Left colon (tissue), 2 donors: ENCODE measurements at regions of chr1 and their contacts with region 1.

Region 1: DNA sequence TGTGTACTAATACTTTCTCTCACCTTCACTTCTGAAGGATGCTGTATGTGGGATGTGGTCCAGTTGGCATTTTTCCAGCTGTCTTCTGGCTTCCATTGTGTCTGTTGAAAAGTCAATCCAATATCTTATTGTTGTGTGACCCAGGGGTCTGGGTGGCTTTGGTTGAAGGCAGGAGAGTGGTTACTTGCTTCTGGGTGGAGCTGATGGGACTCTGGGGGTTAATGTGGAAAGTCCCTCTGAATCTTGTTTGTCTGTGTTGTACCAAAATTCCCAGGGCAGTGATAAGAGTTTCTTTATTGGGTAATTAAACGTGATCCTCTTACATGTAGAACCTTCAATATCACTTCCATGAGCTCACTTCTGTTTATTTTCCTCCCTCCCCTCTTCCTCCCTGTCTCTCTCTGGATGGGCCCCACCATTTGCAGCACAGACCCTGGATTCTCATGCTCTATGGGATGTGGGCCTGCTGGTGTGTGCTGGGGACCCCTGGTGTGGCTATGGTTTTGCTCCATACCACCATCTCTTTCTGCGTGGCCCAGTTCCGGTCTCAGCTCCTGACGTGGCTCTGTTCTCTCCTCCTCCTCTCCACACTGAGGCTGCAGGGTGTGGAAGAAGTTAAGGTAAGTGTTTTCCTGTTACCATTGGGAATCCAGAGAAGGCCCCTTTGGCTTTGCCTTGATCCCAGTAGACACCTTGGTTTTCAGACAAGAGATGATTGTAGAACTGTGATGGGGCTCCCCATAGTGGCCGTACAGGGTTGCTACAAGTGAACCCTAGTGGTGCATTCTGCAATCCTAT is 71.5 kb downstream of the HHAT start:
- DNase-seq: peak; percentile 34
- ATAC-seq: peak; percentile 91

Region 2: DNA sequence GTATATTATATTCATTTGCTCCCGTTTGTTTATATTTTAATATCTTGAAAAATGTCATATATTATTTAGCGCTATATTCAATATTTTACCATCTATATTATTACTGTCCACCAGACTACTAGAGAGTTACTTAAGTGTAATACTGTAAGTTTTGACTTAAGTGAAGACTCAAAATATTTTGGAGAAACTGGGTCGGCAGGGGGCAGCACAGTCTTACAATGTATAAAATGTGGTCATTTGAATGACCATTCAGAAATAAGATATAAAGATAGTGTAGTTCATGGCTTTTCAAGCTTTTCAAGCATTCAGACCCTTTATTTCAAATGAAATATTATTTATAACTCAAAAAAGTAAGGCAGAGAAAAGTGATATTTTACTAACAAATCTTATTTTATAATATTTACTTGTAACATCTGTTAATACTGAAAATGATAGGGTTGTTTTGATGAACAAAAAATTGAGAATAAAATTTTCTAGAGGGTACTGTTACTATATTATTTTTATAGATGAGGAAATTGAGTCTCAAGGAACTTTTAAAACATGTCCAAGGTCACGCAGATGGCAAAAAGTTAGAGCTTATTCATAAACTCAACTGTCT is 256.7 kb before region 1 on chr1:
- intact Hi-C with region 1: loop called in 1 of 2 experiments (anchors 10 kb)
- DNase-seq: peak; percentile 39 to 89
- ATAC-seq: peak; percentile 46

Region 3: DNA sequence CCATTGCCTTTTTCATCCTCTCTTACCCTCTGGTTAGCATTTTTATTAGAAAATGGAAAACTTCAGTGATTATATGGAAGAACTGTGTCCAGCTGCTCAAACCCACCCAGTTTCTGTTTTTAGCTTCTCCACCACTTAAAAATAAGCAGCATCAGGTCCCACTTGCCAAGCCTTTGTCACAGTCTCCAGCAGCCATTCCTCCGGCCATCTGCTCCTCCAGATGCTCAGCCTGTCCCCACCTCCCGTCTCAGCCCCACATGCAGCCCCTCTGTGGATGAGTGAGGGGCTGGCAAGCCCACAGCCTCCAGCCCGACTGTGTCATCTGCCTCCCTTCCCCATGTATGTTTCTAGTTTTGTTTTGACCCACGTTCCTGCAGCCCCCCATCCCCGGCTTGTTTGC is 218.1 kb after region 1 on chr1:
- intact Hi-C with region 1: no loop called
- DNase-seq: no peak
- ATAC-seq: no peak

Region 4: GRCh38 chr1:211133836-211134669 is 733.8 kb after region 1 on chr1 and contains the start of gene KCNH1:
- intact Hi-C with region 1: loop called in 1 of 2 experiments (anchors 5 kb)
- DNase-seq: peak; percentile 38 to 74
- ATAC-seq: peak; percentile 91
- total RNA-seq, gene KCNH1: 0.27 to 0.70 TPM